ENCODE measurements at regions of chr1 and their contacts with region 1.

Region 1: GRCh38 chr1:245041058-245041698 is 113.6 kb upstream of the KIF26B start:
- DNase-seq: no peak

Region 2: DNA sequence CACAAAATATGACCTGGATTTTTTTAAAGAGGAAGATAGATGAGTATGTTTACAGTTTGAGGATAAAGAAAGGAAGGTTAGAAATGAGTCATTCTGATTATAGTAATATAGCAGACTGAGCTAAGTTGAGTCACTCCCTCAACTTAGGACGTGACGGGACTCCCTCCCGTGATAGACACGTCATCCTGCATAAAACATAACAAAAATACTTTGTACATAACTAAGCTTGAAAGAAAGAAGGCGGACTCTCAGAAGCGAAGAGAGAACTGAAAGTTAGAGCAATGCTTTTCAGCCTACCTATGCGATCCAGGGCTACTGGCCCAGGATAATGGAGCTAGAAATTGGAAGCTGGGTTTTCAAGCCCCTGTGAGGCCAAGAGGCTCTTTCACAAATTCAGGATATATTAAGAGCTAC is 441.2 kb before region 1 on chr1:
- intact Hi-C with region 1: loop called (anchors 5 kb)
- DNase-seq: no peak

Region 3: GRCh38 chr1:244796718-244797406 is 244.3 kb before region 1 on chr1:
- intact Hi-C with region 1: loop called (anchors 2 kb)
- DNase-seq: peak in 6 of 10 donors; percentile 18 to 81 (median 70)

Region 4: GRCh38 chr1:244835276-244836134 is 205.7 kb before region 1 on chr1 and contains the start of gene COX20:
- intact Hi-C with region 1: loop called (anchors 2 kb)
- DNase-seq: peak; percentile 78 to 96 (median 84)

Region 5: GRCh38 chr1:244970661-244971551 is 70.3 kb before region 1 on chr1:
- intact Hi-C with region 1: loop called (anchors 2 kb)
- DNase-seq: peak; percentile 88 to 99 (median 92)